PC-3 (cell line): ENCODE measurements at regions of chr4 and their contacts with region 1.

Region 1: DNA sequence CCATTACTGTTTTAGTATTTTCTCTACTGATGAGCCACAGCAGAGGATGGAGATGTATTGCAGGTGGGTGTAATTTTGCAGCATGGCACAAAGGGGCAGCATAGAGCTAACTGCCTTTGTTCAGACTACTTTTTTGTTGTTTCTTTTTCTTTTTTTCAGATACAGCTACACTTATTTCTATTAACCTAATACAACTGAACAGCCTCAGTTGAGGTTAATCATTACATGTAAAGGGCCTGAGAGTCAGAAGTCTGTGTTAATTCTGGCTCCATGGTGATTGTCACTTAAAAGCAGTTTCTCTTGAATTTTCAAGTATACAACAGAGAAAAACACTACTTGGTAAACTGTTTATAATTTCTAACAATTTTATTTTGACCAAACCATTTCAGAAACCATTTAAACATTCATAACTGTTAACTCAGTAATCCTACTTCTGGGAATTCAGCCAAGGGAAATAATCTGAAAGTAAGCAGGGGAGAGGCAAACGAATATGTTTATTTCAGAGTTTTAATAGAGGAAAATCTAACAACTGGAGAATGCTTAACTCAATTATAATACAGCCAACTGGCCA is 13.9 kb upstream of the PPEF2 start:
- DNase-seq: peak; percentile 25
- ATAC-seq: peak; percentile 62
- H3K4me3 ChIP-seq: no peak overlapping the region
- H3K27ac ChIP-seq: no peak overlapping the region
- H3K4me1 ChIP-seq: no peaks in the 10 kb centered on the region
- H3K27me3 ChIP-seq: no peaks in the 10 kb centered on the region
- CTCF ChIP-seq: peak; percentile 78

Region 2: DNA sequence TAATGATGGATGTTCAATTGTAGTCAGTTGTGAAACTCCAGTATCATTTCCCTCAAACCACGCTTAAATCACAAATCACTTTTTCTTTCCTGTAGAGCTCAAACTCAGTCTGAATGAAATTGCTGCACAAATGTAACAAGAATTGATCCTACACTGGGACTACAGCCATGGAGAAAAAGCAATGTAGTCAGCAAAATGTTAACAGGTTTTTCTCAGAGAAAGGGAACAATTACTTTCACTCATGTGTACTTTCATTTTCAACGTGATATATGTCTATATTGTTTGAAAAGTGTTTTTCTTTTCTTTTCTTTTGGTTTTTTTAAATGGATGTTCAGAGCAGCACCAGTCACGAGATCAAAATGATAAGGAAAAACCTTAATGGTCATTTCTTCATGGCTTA is 51.9 kb after region 1 on chr4:
- CTCF ChIA-PET with region 1: no interaction called
- POLR2A ChIA-PET with region 1: no interaction called
- intact Hi-C with region 1: no loop called
- DNase-seq: no peak
- ATAC-seq: no peak
- H3K4me3 ChIP-seq: no peak overlapping the region
- H3K27ac ChIP-seq: no peak overlapping the region
- H3K4me1 ChIP-seq: no peaks in the 10 kb centered on the region
- H3K27me3 ChIP-seq: no peaks in the 10 kb centered on the region
- CTCF ChIP-seq: no peak

Region 3: GRCh38 chr4:76067652-76068286 is 151.6 kb after region 1 on chr4:
- CTCF ChIA-PET with region 1: no interaction called
- POLR2A ChIA-PET with region 1: no interaction called
- intact Hi-C with region 1: loop called (anchors 1 kb)
- DNase-seq: peak; percentile 80
- ATAC-seq: peak; percentile 94
- H3K4me3 ChIP-seq: no peak overlapping the region
- H3K27ac ChIP-seq: no peak overlapping the region
- H3K4me1 ChIP-seq: no peaks in the 10 kb centered on the region
- H3K27me3 ChIP-seq: no peaks in the 10 kb centered on the region
- CTCF ChIP-seq: peak; percentile 80